Caco-2 (cell line): ENCODE measurements at regions of chr5 and their contacts with region 1.

Region 1: GRCh38 chr5:134225618-134226440 is at the start of gene PPP2CA:
- DNase-seq: peak; percentile 99 to 100
- H3K4me3 ChIP-seq: peak within 1 kb of the TSS; percentile 96
- H3K4me3 Mint-ChIP-seq: peak within 1 kb of the TSS; percentile 81
- H3K27ac Mint-ChIP-seq: peak within 1 kb of the TSS; percentile 99
- H3K4me1 ChIP-seq: peaks cover 21% of the 10 kb centered on the region
- H3K4me1 Mint-ChIP-seq: peaks cover 34% of the 10 kb centered on the region
- H3K27me3 ChIP-seq: no peaks in the 10 kb centered on the region
- H3K27me3 Mint-ChIP-seq: no peaks in the 10 kb centered on the region
- CTCF ChIP-seq: peak in 1 of 2 experiments; percentile 0
- total RNA-seq, gene PPP2CA: 202 and 224 TPM in 2 replicates

Region 2: GRCh38 chr5:134176511-134177368 is 49.1 kb before region 1 on chr5 and contains the start of gene SKP1:
- CTCF ChIA-PET with region 1: no interaction called
- POLR2A ChIA-PET with region 1: interaction called, 32 read pairs
- intact Hi-C with region 1: loop called (anchors 2 kb)
- DNase-seq: peak; percentile 83 to 91
- H3K4me3 ChIP-seq: peak within 1 kb of the TSS; percentile 97
- H3K4me3 Mint-ChIP-seq: peak within 1 kb of the TSS; percentile 93
- H3K27ac Mint-ChIP-seq: peak within 1 kb of the TSS; percentile 98
- H3K4me1 ChIP-seq: peaks cover 8% of the 10 kb centered on the region; the same call in 1 of the 2 replicates
- H3K4me1 Mint-ChIP-seq: peaks cover 8% of the 10 kb centered on the region
- H3K27me3 ChIP-seq: no peaks in the 10 kb centered on the region
- H3K27me3 Mint-ChIP-seq: no peaks in the 10 kb centered on the region
- CTCF ChIP-seq: no peak
- total RNA-seq, gene SKP1: 351 and 365 TPM in 2 replicates

Region 3: GRCh38 chr5:134184155-134185135 is 41.4 kb before region 1 on chr5:
- CTCF ChIA-PET with region 1: no interaction called
- POLR2A ChIA-PET with region 1: interaction called, 4 read pairs
- intact Hi-C with region 1: loop called (anchors 2 kb)
- DNase-seq: peak; percentile 80 to 83
- H3K4me3 ChIP-seq: no peak overlapping the region
- H3K4me3 Mint-ChIP-seq: no peak overlapping the region
- H3K27ac Mint-ChIP-seq: no peak overlapping the region
- H3K4me1 ChIP-seq: peaks cover 8% of the 10 kb centered on the region; the same call in 1 of the 2 replicates
- H3K4me1 Mint-ChIP-seq: no peaks in the 10 kb centered on the region
- H3K27me3 ChIP-seq: no peaks in the 10 kb centered on the region
- H3K27me3 Mint-ChIP-seq: no peaks in the 10 kb centered on the region
- CTCF ChIP-seq: peak; percentile 90 to 94

Region 4: DNA sequence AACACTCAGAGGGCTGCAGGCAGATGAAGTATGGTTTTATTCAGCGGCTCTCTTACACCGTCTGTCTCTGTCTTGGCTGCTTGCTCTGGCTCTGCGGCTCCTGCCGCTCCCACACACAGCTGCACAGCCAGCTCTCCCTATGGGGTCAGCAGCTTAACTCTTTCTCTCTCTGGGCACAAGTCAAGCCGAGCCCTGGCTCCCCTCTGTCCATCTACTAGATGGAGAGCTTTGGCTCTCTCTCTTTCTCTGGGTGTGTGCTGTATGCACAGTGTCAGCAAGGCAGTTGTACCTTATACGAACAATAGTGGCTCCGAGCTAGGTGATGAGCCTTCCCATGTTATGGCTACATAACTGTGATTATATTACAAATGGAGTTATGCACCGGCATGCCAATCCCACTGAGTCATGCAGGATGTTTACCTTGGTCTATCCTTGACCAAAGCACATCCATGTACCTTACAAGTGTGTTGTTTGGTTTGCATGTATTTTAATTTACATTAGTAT is 19.3 kb after region 1 on chr5:
- CTCF ChIA-PET with region 1: interaction called, 9 read pairs
- POLR2A ChIA-PET with region 1: interaction called, 10 read pairs
- intact Hi-C with region 1: loop called (anchors 2 kb)
- DNase-seq: peak; percentile 50 to 63
- H3K4me3 ChIP-seq: no peak overlapping the region
- H3K4me3 Mint-ChIP-seq: no peak overlapping the region
- H3K27ac Mint-ChIP-seq: peak overlapping the region; percentile 18
- H3K4me1 ChIP-seq: peaks cover 37% of the 10 kb centered on the region
- H3K4me1 Mint-ChIP-seq: peaks cover 26% of the 10 kb centered on the region
- H3K27me3 ChIP-seq: no peaks in the 10 kb centered on the region
- H3K27me3 Mint-ChIP-seq: no peaks in the 10 kb centered on the region
- CTCF ChIP-seq: no peak

Region 5: DNA sequence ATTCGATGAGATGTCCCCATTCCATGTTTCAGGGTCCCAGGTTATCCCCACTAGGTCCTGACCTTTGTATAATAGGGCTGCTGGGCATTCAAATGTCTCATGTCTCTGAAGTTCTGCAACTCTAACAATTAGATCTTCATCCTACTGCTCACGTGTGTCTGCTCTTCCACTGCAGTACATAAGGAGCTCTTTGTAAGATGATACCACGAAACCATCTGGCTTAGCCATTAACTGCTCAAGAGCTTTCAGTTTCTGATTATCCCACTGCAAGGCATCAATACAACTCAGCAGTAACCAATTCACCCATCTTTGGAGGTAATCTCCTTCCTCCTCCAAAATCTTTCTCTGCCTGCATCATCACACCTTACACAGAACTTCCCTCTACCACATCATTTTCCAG is 50.0 kb after region 1 on chr5:
- CTCF ChIA-PET with region 1: interaction called, 3 read pairs
- POLR2A ChIA-PET with region 1: interaction called, 28 read pairs
- intact Hi-C with region 1: loop called (anchors 1 kb)
- DNase-seq: no peak
- H3K4me3 ChIP-seq: no peak overlapping the region
- H3K4me3 Mint-ChIP-seq: no peak overlapping the region
- H3K27ac Mint-ChIP-seq: no peak overlapping the region
- H3K4me1 ChIP-seq: peaks cover 7% of the 10 kb centered on the region; the same call in 1 of the 2 replicates
- H3K4me1 Mint-ChIP-seq: peaks cover 2% of the 10 kb centered on the region
- H3K27me3 ChIP-seq: no peaks in the 10 kb centered on the region
- H3K27me3 Mint-ChIP-seq: no peaks in the 10 kb centered on the region
- CTCF ChIP-seq: no peak

Region 6: GRCh38 chr5:134289509-134290113 is 63.8 kb after region 1 on chr5:
- CTCF ChIA-PET with region 1: interaction called, 14 read pairs
- POLR2A ChIA-PET with region 1: interaction called, 9 read pairs
- intact Hi-C with region 1: loop called (anchors 1 kb)
- DNase-seq: peak; percentile 72 to 79
- H3K4me3 ChIP-seq: no peak overlapping the region
- H3K4me3 Mint-ChIP-seq: no peak overlapping the region
- H3K27ac Mint-ChIP-seq: no peak overlapping the region
- H3K4me1 ChIP-seq: no peaks in the 10 kb centered on the region
- H3K4me1 Mint-ChIP-seq: peaks cover 11% of the 10 kb centered on the region
- H3K27me3 ChIP-seq: no peaks in the 10 kb centered on the region
- H3K27me3 Mint-ChIP-seq: no peaks in the 10 kb centered on the region
- CTCF ChIP-seq: peak; percentile 69 to 86